Panc1 (cell line): ENCODE measurements at regions of chr6 and their contacts with region 1.

Region 1: GRCh38 chr6:42879372-42880239 is at the start of gene RPL7L1:
- DNase-seq: peak; percentile 85
- ATAC-seq: peak; percentile 97
- H3K4me3 ChIP-seq: peak within 1 kb of the TSS; percentile 77 to 99
- H3K27ac ChIP-seq: peak within 1 kb of the TSS; percentile 99
- H3K4me1 ChIP-seq: peaks cover 4% of the 10 kb centered on the region; the same call in 1 of the 2 replicates
- H3K27me3 ChIP-seq: no peaks in the 10 kb centered on the region
- CTCF ChIP-seq: no peak
- total RNA-seq, gene RPL7L1: 109 TPM

Region 2: DNA sequence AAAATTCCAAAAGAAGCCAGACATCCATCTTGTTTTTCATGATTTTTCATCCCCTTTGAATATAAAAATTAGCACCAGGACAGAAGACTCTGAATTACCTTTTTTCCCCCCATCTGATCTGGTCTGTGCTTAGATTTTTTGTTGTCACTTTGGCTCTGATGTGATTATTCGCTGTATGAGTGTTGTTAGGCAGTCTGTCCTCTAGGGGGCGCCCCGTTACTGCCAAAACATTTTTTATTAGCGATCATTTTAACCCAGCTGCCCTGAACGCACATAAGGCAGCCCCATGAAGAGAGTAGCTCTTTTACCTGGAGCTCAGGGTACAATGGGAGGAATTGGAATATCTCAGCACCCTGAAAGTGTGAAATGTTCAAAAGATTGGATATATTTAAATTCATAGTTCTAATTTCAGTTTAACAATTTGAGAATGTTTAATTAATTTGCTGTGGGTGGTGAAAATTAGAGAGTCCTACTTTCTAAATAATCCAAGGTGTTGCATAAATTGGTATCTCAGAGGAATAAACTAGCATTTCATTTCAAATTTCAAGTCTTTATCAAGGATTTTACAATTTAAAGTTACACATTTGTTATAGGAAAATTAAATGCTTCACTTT is 218.0 kb before region 1 on chr6:
- CTCF ChIA-PET with region 1: no interaction called
- POLR2A ChIA-PET with region 1: no interaction called
- in situ Hi-C with region 1: no loop called
- intact Hi-C with region 1: loop called (anchors 5 kb)
- DNase-seq: peak; percentile 27
- ATAC-seq: peak; percentile 85
- H3K4me3 ChIP-seq: no peak overlapping the region
- H3K27ac ChIP-seq: no peak overlapping the region
- H3K4me1 ChIP-seq: no peaks in the 10 kb centered on the region
- H3K27me3 ChIP-seq: no peaks in the 10 kb centered on the region
- CTCF ChIP-seq: peak; percentile 95

Region 3: DNA sequence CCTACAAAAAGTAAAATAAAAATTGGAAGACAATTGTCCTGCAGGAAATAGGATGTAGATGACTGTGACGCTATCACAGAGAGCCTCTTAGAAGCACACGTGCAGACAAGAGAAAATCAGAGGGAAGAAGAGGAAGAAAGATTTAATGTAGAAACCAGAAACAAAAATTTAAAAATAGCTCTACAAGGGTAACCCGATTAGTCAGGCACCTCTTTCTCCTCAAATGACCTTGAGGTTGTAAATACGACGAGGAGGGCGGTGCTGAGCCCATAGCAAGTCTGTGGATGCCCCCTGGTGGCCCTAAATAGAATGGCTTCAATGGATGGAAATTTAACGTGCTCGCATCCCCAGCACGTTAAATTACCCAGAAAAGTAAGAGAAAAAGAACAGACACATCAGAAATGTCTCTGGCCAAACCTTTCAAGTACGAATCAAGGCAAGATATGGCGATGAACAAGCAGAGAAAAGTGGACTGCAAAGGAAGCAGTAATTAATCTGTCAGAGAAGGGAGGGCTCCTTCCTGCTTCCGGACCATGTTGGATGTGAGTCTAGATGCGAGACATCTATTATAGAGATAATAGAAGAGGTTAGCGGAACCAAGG is 153.0 kb before region 1 on chr6:
- CTCF ChIA-PET with region 1: no interaction called
- POLR2A ChIA-PET with region 1: no interaction called
- in situ Hi-C with region 1: no loop called
- intact Hi-C with region 1: loop called (anchors 5 kb)
- DNase-seq: no peak
- ATAC-seq: peak; percentile 94
- H3K4me3 ChIP-seq: no peak overlapping the region
- H3K27ac ChIP-seq: no peak overlapping the region
- H3K4me1 ChIP-seq: peaks cover 4% of the 10 kb centered on the region; the same call in 1 of the 2 replicates
- H3K27me3 ChIP-seq: no peaks in the 10 kb centered on the region
- CTCF ChIP-seq: peak; percentile 93

Region 4: DNA sequence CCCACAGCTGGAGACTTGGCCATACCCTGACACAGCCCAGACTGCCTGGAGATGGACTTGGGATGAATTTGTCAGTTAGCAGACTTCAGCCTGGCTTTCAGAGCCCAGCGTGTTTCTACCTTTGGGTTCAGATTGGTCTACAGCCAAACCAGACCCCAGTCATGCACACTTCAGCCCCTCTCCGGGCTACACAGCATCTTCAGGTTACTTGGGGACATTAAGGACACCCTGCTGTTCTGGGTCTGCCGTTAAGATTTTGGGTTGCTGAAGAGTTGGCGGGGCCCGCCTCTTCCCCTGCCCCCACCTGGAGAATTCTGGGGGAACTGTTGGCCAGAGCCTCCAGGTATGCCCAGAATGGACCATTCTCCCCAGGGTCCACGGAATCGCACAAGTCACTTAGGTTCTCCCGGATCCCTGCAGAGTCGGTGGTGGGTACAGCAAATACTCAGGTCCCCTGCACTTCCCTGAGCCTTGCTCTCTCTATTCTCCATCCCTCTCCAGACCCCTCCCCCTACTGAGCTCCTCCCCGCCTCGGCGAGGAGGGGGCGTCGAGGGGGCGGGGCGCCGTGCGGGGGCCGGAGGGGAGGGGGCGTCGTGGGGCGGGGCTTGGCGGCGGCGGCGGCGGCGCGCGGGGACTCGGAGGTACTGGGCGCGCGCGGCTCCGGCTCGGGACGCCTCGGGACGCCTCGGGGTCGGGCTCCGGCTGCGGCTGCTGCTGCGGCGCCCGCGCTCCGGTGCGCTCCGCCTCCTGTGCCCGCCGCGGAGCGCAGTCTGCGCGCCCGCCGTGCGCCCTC is 196.3 kb after region 1 on chr6 and contains the start of gene PTK7:
- CTCF ChIA-PET with region 1: no interaction called
- POLR2A ChIA-PET with region 1: interaction called, 15 read pairs
- in situ Hi-C with region 1: no loop called
- intact Hi-C with region 1: no loop called
- DNase-seq: no peak
- ATAC-seq: peak; percentile 86
- H3K4me3 ChIP-seq: peak within 1 kb of the TSS; percentile 90 to 91
- H3K27ac ChIP-seq: peak within 1 kb of the TSS; percentile 91
- H3K4me1 ChIP-seq: peaks cover 25% of the 10 kb centered on the region
- H3K27me3 ChIP-seq: no peaks in the 10 kb centered on the region
- CTCF ChIP-seq: no peak
- total RNA-seq, gene PTK7: 240 TPM